G401 (cell line): ENCODE measurements at regions of chr7 and their contacts with region 1.

Region 1: DNA sequence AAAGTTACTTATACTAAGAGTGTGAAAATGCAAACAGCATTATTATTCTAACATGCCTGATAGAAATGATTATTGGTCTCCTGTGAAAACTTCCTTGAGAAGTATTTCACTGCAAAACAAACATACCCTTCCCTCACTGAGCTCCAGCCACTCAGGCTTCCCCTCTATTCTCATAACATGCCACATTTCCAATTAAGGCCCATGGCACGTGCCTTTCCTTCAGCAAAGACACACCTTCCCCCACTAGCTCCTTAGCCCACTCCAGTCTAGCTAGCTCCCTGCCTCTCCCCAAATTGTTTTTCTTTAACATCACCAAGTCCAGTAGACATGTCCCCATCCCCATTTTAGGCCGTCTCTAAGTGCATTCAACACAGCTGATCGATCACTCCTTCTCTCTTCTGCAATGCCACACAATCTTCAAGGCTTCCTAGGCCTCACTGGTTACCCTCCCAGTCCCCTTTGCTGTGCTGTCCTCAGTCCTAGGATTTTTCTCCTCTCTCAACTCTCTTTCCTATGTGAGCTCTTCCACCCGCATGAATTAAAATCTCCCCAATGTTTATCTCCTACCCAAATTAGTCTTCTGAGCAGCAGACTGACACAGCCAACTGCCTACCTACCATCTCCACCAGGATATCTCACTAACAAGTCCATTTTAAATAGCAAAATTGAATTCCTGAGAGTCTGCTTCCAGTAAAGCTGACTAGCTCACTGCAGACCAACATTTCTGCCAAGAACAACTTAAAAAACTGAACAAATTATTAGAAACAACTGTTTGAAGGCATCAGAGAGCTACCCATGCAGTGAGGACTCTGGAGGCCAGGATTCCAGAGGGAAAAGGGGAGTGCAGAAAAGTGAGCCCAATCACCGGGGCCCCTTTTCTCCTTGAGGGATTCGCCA is 11.9 kb downstream of the CYTH3 start:
- DNase-seq: no peak

Region 2: GRCh38 chr7:6032167-6032566 is 228.4 kb before region 1 on chr7:
- in situ Hi-C with region 1: loop called (anchors 10 kb)
- DNase-seq: peak; percentile 25

Region 3: DNA sequence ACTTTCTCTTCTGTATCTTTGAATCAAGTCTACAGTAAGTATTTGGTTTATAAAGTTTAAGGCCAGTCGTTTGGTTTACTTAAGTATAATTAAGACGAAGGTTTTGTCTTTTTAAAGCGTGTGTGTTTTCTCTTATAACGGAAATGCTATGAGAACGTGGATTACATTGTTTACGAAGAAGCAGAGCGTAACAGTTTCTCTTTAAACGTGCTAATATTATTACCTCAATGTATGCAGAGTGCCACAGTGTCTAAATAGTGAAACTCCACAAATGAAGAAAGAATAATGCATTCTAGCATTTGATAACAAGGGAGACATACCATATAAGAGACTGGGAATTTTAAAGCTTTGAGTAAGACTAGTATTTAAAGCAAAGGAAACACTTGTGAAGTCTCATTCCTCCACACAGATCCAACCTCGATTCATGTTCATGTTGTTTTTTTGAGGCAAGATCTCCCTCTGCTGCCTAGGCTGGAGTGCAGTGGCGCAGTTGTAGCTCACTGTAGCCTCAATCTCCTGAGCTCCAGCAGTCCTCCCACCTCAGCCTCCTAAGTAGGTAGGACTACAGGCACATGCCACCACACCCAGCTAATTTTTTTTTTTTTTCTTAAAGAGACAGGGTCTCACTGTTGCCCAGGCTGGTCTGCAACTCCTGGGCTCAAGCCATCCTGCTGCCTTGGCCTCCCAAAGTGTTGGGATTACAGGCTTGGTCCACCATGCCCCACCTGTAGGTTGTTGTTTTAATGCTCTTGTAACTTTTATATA is 154.2 kb before region 1 on chr7:
- in situ Hi-C with region 1: no loop called
- DNase-seq: peak; percentile 19

Region 4: DNA sequence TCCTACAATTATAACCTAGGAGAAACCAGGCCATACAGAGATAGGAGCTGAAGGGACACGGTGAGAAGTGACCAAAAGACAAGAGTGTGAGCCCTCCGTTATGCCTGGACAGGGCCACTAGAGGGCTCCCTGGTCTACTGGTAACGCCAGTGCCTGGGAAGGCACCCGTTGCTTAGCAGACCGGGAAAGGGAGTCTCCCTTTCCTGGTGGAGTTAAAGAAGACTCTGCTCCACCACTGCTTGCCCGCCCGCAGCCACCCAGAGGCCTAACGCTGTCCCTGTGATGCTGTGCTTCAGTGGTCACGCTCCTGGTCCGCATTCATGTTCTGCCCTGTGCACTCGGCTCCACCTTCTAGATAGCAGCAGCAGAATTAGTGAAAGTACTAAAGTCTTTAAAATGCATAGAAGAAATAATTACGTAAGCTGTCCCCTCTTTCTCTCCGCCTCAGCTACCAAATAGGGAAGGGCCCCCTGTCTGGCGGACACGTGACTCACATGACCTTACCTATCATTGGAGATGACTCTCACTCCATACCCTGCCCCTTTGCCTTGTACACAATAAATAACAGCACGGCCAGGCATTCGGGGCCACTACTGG is 255.9 kb after region 1 on chr7:
- in situ Hi-C with region 1: no loop called
- DNase-seq: peak; percentile 93